CD4-positive, alpha-beta memory T cell (primary cell): ENCODE measurements at regions of chr1 and their contacts with region 1.

Region 1: DNA sequence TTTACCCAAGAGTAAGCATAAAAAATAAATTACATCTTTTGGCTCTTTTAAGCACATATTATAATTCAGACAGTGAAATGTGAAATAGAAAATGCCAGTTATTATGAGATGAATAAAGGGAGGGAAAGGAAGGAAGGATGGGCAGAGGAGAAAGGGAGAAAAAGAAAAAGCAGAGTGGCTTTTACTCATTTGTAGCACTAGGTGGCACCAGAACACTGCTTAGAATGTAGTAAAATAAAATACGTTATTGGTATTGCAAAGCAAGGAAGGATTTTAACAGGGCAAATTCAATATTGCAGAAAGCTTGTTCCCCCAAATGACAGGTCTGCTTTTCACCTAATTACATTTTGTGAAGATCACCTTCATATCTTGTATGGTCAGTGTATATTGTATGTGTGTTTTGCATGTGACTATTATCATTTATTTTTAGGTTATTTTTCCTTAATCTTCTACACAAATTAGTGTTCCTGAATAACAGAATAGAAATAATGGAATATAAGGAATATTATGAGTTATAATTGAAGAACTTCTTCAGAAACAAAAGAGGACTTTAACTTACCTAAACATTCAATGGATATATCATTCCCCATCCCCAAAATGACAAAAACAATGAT is 9.1 kb upstream of the PCNX2 start:
- DNase-seq: peak in 4 of 5 donors; percentile 25 to 36 (median 32)
- H3K4me3 ChIP-seq: no peak overlapping the region
- H3K4me3 Mint-ChIP-seq: no peak overlapping the region
- H3K27ac ChIP-seq: no peak overlapping the region
- H3K27ac Mint-ChIP-seq: no peak overlapping the region
- H3K4me1 ChIP-seq: no peaks in the 10 kb centered on the region
- H3K4me1 Mint-ChIP-seq: no peaks in the 10 kb centered on the region
- H3K27me3 ChIP-seq: no peaks in the 10 kb centered on the region
- H3K27me3 Mint-ChIP-seq: peaks cover 4 to 8% of the 10 kb centered on the region in 2 donors

Region 2: DNA sequence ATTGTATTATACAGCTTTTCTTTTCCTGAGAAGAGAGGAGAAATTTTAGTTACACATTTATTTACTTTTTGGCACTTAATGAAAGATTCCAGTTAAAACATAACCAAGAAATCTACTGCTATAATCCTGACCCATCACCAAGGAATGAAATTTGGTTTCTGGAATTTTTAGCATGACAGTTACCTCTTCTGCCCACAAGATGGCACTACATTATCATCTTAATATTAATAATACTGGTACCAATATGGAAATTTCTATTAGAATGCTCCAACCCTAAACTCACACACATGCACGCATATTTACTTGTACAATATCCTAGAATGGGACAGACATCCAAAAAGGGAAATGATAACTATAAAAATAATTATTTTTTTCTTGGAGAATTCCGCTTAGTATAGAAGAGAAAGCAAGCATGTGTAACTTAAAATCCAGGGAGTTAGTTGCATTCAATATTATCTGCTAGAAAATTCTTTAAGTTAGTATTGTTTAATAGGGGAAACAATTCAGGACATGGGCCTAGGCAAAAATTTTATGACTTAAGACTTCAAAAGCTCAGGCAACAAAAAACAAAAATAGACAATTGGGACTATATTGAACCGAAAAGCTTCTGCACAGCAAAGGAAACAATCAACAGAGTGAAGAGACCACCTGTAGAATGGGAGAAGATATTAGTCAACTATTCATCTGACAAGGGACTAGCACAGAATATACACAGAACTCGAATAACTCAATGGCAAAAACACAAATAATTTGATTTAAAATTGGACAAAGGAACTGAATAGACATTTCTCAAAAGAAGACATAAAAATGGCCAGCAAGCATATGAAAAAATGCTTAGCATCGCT is 60.3 kb after region 1 on chr1:
- CTCF ChIA-PET with region 1: interaction called, 7 read pairs
- POLR2A ChIA-PET with region 1: no interaction called
- intact Hi-C with region 1: loop called (anchors 1 kb)
- DNase-seq: peak in 1 of 5 donors; percentile 3
- H3K4me3 ChIP-seq: no peak overlapping the region
- H3K4me3 Mint-ChIP-seq: no peak overlapping the region
- H3K27ac ChIP-seq: no peak overlapping the region
- H3K27ac Mint-ChIP-seq: no peak overlapping the region
- H3K4me1 ChIP-seq: no peaks in the 10 kb centered on the region
- H3K4me1 Mint-ChIP-seq: no peaks in the 10 kb centered on the region
- H3K27me3 ChIP-seq: no peaks in the 10 kb centered on the region
- H3K27me3 Mint-ChIP-seq: no peaks in the 10 kb centered on the region

Region 3: GRCh38 chr1:233394860-233395717 is 90.5 kb after region 1 on chr1:
- CTCF ChIA-PET with region 1: no interaction called
- POLR2A ChIA-PET with region 1: no interaction called
- intact Hi-C with region 1: loop called (anchors 10 kb)
- DNase-seq: peak; percentile 15 to 49 (median 26)
- H3K4me3 ChIP-seq: no peak overlapping the region
- H3K4me3 Mint-ChIP-seq: no peak overlapping the region
- H3K27ac ChIP-seq: no peak overlapping the region
- H3K27ac Mint-ChIP-seq: no peak overlapping the region
- H3K4me1 ChIP-seq: no peaks in the 10 kb centered on the region
- H3K4me1 Mint-ChIP-seq: no peaks in the 10 kb centered on the region
- H3K27me3 ChIP-seq: no peaks in the 10 kb centered on the region
- H3K27me3 Mint-ChIP-seq: peaks cover 24 to 26% of the 10 kb centered on the region in 2 donors

Region 4: GRCh38 chr1:233790662-233791375 is 486.2 kb after region 1 on chr1:
- CTCF ChIA-PET with region 1: interaction called, 16 read pairs
- POLR2A ChIA-PET with region 1: no interaction called
- intact Hi-C with region 1: no loop called
- DNase-seq: peak in 4 of 5 donors; percentile 28 to 44 (median 34)
- H3K4me3 ChIP-seq: no peak overlapping the region
- H3K4me3 Mint-ChIP-seq: no peak overlapping the region
- H3K27ac ChIP-seq: no peak overlapping the region
- H3K27ac Mint-ChIP-seq: no peak overlapping the region
- H3K4me1 ChIP-seq: no peaks in the 10 kb centered on the region
- H3K4me1 Mint-ChIP-seq: no peaks in the 10 kb centered on the region
- H3K27me3 ChIP-seq: no peaks in the 10 kb centered on the region
- H3K27me3 Mint-ChIP-seq: peaks cover 9 to 18% of the 10 kb centered on the region in 2 donors

Region 5: DNA sequence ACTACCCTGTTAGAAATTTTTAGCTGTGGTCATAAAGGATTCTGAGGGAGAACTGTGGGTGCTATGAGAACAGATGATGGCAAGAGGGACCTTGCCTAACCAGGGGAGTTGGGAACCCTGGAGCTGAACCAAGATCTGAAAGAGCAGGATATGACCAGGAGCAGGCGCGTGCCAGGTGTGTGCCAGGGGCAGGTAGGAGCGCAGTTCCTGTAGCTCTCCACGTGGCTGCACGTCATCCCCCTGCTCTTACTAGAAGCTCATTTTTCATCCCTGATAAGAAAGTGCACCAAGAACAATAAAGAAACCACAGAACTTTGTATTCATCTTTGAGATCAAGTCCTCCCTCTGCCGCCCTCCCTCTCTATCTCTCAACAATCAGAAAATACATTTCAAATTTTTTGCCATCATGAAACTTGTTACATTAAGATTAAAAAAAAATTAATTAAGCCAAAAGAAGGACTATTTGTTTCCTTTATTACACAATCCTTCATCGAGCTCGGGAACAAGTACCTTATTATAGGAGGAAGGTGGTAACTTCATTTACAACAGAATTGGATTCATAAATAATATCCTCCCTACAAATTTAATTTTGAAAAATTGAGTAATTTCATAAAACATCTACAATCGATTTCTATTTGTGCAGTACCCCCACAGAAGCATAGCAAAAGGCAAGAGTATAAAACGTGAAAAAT is 678.4 kb after region 1 on chr1:
- CTCF ChIA-PET with region 1: no interaction called
- POLR2A ChIA-PET with region 1: no interaction called
- intact Hi-C with region 1: loop called (anchors 10 kb)
- DNase-seq: no peak
- H3K4me3 ChIP-seq: no peak overlapping the region
- H3K4me3 Mint-ChIP-seq: no peak overlapping the region
- H3K27ac ChIP-seq: no peak overlapping the region
- H3K27ac Mint-ChIP-seq: no peak overlapping the region
- H3K4me1 ChIP-seq: no peaks in the 10 kb centered on the region
- H3K4me1 Mint-ChIP-seq: no peaks in the 10 kb centered on the region
- H3K27me3 ChIP-seq: no peaks in the 10 kb centered on the region
- H3K27me3 Mint-ChIP-seq: peaks cover 0 to 5% of the 10 kb centered on the region in 2 donors

Region 6: DNA sequence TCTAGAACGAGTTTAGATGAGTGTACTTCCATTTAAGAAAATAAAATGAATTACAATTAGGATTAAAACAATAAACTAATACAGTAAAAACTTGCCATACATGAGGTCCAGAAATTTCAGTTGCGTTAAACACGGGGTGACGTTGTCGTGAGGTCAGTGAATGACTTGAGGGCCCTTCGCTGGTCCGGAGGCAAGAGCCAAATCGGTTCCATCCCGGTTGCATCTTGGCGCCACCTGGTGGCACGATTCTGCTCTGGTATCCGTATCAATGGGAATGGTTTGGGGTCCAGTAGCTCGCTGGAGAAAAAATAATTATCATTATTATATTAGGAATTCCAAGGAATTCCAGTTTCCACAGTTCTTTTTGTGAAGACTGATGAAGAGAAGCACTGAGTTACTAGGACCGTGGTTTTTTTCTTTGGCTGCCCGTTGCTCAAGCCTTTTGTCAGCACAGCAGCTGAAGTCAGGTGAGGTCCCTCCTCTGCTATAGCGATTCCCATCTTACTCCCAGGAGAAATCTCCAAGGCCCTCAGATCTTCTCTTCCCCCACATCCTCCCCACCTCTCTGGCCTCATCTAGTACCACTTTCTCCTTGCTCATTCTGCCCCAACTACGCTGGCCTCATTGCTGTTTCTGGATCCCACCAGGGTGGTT is 761.3 kb after region 1 on chr1:
- CTCF ChIA-PET with region 1: interaction called, 29 read pairs
- POLR2A ChIA-PET with region 1: no interaction called
- intact Hi-C with region 1: no loop called
- DNase-seq: peak; percentile 38 to 54 (median 41)
- H3K4me3 ChIP-seq: no peak overlapping the region
- H3K4me3 Mint-ChIP-seq: no peak overlapping the region
- H3K27ac ChIP-seq: no peak overlapping the region
- H3K27ac Mint-ChIP-seq: no peak overlapping the region
- H3K4me1 ChIP-seq: no peaks in the 10 kb centered on the region
- H3K4me1 Mint-ChIP-seq: peaks cover 0 to 8% (median 3%) of the 10 kb centered on the region in 4 donors
- H3K27me3 ChIP-seq: no peaks in the 10 kb centered on the region
- H3K27me3 Mint-ChIP-seq: peaks cover 6% of the 10 kb centered on the region in 2 donors